Cardiac septum (tissue), 1 donor: ENCODE measurements at regions of chr2 and their contacts with region 1.

Region 1: DNA sequence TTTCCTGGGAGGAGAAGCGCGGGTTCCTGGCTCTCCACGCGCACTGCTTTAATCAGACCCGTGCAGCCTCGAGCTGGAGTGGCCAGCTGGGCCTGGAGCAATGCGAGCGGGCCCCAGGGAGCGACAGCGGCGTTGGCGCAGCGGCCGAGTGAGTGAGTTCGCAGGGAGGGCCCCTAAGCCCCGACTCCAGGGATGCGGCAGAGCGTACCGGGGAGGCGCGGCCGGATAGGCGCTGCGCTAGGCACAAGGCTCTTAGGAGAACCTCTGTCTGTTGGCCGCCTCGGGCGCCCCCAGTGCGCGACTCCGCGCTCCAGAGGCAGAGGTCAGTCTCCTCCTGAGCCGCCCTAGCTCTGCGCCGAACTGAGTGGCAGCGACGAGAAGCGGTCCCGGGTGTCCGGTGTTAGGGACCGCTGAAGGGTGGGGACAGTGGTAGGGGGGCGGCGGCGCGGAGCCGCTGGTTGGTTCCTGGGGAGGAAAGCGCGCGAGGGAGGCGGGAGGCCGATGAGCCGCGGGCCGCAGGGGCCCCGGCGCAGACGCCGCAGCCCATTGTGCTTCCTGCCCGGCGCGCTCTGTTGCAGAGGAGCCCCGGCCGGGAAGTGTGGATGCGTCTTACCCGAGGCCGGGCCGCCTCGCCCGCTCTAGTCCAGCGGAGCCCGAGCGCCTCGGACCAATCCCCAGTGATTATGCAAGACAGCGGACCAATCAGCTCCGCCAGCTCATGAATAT is 410 bp upstream of the DLX1 start:
- DNase-seq: no peak

Region 2: DNA sequence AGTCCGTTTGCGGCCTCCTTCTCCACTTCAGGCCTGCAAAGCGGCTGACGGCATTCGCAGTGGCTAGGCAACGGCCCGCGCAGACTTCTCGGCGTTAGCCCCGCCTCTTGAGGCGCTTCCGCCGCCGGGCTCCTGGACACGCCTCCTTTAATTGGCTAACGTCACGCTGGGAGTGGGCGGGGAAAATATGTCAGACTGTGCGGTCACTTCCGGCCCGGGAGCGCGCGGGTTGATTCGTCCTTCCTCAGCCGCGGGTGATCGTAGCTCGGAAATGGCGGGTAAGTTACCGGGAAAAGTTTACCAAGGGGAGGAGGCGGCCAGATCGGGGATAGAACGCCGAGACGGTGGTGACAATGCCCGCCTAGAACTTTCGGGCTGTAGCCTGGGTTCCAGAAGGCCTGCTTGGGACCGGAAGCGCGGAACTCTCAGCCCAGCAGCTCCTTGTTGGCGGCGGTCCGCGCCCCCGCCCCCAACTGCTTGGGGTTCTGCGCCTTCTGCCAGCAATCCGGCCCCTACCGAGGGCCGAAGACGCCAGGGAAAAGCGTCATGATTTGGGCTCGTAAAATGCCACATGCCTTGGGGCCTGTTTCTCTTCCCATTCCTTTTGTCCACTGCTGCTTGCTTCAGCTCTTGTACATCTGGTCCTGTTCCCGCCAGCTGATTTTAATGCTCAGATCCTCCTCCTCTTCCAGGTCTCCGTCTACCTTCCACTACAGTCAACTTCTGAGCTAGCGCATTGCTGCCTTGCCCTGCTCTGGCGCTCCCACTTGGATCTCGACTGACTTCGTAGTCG is 162.5 kb before region 1 on chr2 and contains the start of gene HAT1:
- intact Hi-C with region 1: loop called (anchors 10 kb)
- DNase-seq: peak; percentile 99
- total RNA-seq, gene HAT1: 32.7 TPM

Region 3: GRCh38 chr2:171999604-172000469 is 85.1 kb before region 1 on chr2 and contains the start of gene METAP1D:
- intact Hi-C with region 1: loop called (anchors 5 kb)
- DNase-seq: peak; percentile 95
- total RNA-seq, gene METAP1D: 4.0 TPM

Region 4: GRCh38 chr2:172128484-172128883 is 43.6 kb after region 1 on chr2:
- intact Hi-C with region 1: no loop called
- DNase-seq: no peak

Region 5: DNA sequence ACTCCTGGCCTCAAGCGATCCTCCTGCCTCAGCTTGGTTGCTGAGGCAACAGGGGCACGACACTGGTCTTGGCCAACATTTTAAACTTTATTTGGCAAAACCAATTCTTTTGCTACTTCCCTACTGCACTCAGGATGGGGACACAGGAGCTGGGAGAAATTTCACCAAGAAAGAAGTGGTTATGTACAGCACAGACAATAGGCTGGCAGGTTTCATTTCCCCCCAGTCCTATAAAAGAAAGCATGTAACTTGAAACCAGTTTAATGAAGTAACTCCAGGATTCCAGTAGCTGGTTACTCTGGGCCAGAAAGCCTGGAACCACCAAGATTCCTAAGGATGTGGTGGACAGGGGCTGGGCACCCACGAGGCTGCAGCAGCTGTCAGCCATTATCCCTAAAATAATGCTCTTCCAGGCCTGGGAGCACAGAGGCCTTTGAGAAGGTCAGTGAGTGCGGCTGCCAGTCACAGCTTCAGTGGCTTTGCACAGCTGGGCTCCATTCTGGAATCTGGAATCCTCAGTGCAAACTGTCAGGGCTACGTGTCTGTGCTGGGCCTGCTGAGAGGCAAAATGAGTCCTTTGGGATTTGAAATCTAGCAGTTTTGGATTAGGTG is 200.2 kb after region 1 on chr2:
- intact Hi-C with region 1: no loop called
- DNase-seq: no peak